ENCODE measurements at regions of chr12 and their contacts with region 1.

Region 1: GRCh38 chr12:1972856-1973317 is 31.4 kb downstream of the DCP1B start:
- DNase-seq: peak in 1 of 2 donors; percentile 82
- H3K4me3 ChIP-seq: peak overlapping the region; percentile 22 to 53
- H3K27ac ChIP-seq: peak overlapping the region; percentile 87
- H3K4me1 ChIP-seq: peaks cover 5 to 53% of the 10 kb centered on the region in 2 donors
- H3K27me3 ChIP-seq: no peaks in the 10 kb centered on the region
- CTCF ChIP-seq: no peak

Region 2: GRCh38 chr12:1749019-1749418 is 223.9 kb before region 1 on chr12:
- intact Hi-C with region 1: no loop called
- DNase-seq: no peak
- H3K4me3 ChIP-seq: no peak overlapping the region
- H3K27ac ChIP-seq: no peak overlapping the region
- H3K4me1 ChIP-seq: no peaks in the 10 kb centered on the region
- H3K27me3 ChIP-seq: no peaks in the 10 kb centered on the region
- CTCF ChIP-seq: no peak

Region 3: GRCh38 chr12:2244013-2244861 is 271.4 kb after region 1 on chr12:
- intact Hi-C with region 1: no loop called
- DNase-seq: peak in 1 of 2 donors; percentile 79
- H3K4me3 ChIP-seq: no peak overlapping the region
- H3K27ac ChIP-seq: peak overlapping the region; percentile 56 to 65
- H3K4me1 ChIP-seq: peaks cover 0 to 26% of the 10 kb centered on the region in 2 donors
- H3K27me3 ChIP-seq: no peaks in the 10 kb centered on the region
- CTCF ChIP-seq: no peak

Region 4: GRCh38 chr12:2273288-2273687 is 300.4 kb after region 1 on chr12:
- intact Hi-C with region 1: loop called (anchors 10 kb)
- DNase-seq: peak in 1 of 2 donors; percentile 81
- H3K4me3 ChIP-seq: no peak overlapping the region
- H3K27ac ChIP-seq: peak overlapping the region; percentile 64 to 84
- H3K4me1 ChIP-seq: peaks cover 7 to 25% of the 10 kb centered on the region in 2 donors
- H3K27me3 ChIP-seq: no peaks in the 10 kb centered on the region
- CTCF ChIP-seq: peak; percentile 35 to 81 (median 69)